MCF 10A (cell line): ENCODE measurements at regions of chr22 and their contacts with region 1.

Region 1: GRCh38 chr22:31211862-31212730 is at the start of gene LIMK2:
- DNase-seq: peak; percentile 89
- H3K4me3 Mint-ChIP-seq: peak within 1 kb of the TSS; percentile 87
- H3K27ac Mint-ChIP-seq: peak within 1 kb of the TSS; percentile 82
- H3K4me1 Mint-ChIP-seq: peaks cover 20% of the 10 kb centered on the region
- H3K27me3 Mint-ChIP-seq: no peaks in the 10 kb centered on the region
- CTCF ChIP-seq: peak; percentile 85
- total RNA-seq, gene LIMK2: 74.4 and 126 TPM in 2 replicates

Region 2: GRCh38 chr22:31179356-31179755 is 32.7 kb before region 1 on chr22:
- CTCF ChIA-PET with region 1: interaction called, 9 read pairs
- POLR2A ChIA-PET with region 1: interaction called, 20 read pairs
- intact Hi-C with region 1: no loop called
- DNase-seq: peak; percentile 81
- H3K4me3 Mint-ChIP-seq: no peak overlapping the region
- H3K27ac Mint-ChIP-seq: peak overlapping the region; percentile 82
- H3K4me1 Mint-ChIP-seq: peaks cover 34% of the 10 kb centered on the region
- H3K27me3 Mint-ChIP-seq: no peaks in the 10 kb centered on the region
- CTCF ChIP-seq: no peak

Region 3: DNA sequence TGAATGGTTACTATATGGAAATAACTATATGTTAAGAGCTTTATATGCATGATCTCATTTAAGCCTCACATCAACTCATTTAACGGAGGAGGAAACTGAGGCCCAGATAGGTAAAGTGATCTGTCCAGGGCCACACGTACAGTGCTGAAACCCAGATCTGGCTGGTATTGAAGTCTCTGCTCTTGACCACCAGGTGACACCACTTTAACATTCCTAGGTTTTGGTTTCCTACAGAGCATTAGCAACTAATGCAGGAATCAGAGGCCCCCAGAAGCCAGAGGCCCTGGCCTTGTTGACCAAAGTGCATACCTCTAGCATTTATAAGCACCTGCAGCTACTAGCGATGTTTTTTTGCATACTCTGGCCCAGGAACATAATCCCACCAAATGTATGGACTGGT is 12.9 kb before region 1 on chr22:
- CTCF ChIA-PET with region 1: interaction called, 33 read pairs
- POLR2A ChIA-PET with region 1: interaction called, 5 read pairs
- intact Hi-C with region 1: no loop called
- DNase-seq: no peak
- H3K4me3 Mint-ChIP-seq: no peak overlapping the region
- H3K27ac Mint-ChIP-seq: no peak overlapping the region
- H3K4me1 Mint-ChIP-seq: no peaks in the 10 kb centered on the region
- H3K27me3 Mint-ChIP-seq: no peaks in the 10 kb centered on the region
- CTCF ChIP-seq: no peak

Region 4: GRCh38 chr22:31230871-31231621 is 18.9 kb after region 1 on chr22:
- CTCF ChIA-PET with region 1: interaction called, 55 read pairs
- POLR2A ChIA-PET with region 1: interaction called, 8 read pairs
- intact Hi-C with region 1: no loop called
- DNase-seq: peak; percentile 47
- H3K4me3 Mint-ChIP-seq: no peak overlapping the region
- H3K27ac Mint-ChIP-seq: peak overlapping the region; percentile 46
- H3K4me1 Mint-ChIP-seq: peaks cover 12% of the 10 kb centered on the region
- H3K27me3 Mint-ChIP-seq: no peaks in the 10 kb centered on the region
- CTCF ChIP-seq: peak; percentile 57

Region 5: DNA sequence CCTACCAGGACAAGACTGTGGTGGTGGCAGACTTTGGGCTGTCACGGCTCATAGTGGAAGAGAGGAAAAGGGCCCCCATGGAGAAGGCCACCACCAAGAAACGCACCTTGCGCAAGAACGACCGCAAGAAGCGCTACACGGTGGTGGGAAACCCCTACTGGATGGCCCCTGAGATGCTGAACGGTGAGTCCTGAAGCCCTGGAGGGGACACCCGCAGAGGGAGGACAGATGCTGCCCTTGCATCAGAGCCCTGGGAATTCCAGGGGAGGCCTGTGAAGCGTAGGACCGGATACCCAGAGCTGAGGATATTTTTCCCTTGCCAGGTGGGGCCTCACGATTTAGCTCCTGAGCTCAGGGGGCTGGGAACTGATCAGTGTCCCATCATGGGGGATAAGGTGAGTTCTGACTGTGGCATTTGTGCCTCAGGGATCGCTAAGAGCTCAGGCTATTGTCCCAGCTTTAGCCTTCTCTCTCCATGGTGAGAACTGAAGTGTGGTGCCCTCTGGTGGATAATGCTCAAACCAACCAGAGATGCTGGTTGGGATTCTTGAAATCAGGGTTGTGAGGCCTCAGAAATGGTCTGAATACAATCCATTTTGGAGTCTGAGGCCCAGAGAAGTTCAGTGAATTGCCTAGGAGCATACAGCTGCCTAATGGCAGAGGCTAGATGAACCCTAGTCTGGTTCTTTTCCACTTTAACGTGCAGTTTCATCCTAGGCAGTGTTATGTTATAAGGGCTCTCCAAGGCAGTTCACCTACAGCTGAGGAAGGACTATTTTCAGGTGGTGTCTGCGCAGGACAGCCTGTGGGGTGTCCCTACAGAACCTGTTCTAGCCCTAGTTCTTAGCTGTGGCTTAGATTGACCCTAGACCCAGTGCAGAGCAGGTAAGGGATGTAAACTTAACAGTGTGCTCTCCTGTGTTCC is 60.7 kb after region 1 on chr22:
- CTCF ChIA-PET with region 1: interaction called, 46 read pairs
- POLR2A ChIA-PET with region 1: interaction called, 7 read pairs
- intact Hi-C with region 1: loop called (anchors 1 kb)
- DNase-seq: peak; percentile 76
- H3K4me3 Mint-ChIP-seq: no peak overlapping the region
- H3K27ac Mint-ChIP-seq: no peak overlapping the region
- H3K4me1 Mint-ChIP-seq: peaks cover 8% of the 10 kb centered on the region
- H3K27me3 Mint-ChIP-seq: no peaks in the 10 kb centered on the region
- CTCF ChIP-seq: peak; percentile 66

Region 6: GRCh38 chr22:31439808-31440207 is 227.7 kb after region 1 on chr22:
- CTCF ChIA-PET with region 1: no interaction called
- POLR2A ChIA-PET with region 1: no interaction called
- intact Hi-C with region 1: no loop called
- DNase-seq: no peak
- H3K4me3 Mint-ChIP-seq: no peak overlapping the region
- H3K27ac Mint-ChIP-seq: no peak overlapping the region
- H3K4me1 Mint-ChIP-seq: no peaks in the 10 kb centered on the region
- H3K27me3 Mint-ChIP-seq: no peaks in the 10 kb centered on the region
- CTCF ChIP-seq: no peak